ENCODE measurements at regions of chr5 and their contacts with region 1.

Region 1: DNA sequence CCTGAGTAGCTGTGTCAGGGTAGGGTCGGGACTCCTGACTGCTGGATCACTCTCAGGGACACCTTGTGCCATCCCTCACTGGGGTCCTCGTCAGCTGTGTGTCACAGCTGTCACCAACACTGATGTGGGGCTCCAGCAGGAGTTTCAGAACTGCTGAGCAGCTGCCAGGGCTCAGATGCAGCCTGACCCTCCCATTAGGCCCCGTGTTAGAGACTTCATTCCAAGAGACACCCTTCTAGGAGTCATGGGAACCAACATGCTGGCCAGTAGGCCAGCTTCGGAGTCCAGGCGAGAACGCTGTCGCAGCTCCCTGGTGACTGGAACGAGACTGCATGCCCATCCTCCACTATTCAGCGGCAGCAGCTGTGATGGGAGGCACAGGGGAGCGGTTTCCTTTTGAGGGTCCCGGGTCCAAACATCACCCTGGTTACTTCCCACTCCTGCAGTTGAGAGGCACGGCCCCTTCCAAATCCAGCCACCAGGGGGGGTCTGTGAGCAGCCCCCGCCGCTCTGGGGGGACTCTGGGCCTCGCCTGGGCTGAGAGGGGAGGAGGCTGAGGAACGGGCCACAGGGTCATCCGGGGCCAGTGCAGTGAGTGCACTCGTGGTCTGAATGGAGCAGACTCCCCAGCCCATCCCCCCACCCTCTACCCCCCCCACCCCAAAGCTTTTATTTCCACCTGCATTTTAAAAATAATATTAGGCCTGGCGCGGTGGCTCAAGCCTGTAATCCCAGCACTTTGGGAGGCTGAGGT is 12.6 kb upstream of the TCF7 start:
- DNase-seq: peak; percentile 62
- ATAC-seq: peak; percentile 91
- H3K4me3 ChIP-seq: no peak overlapping the region
- H3K27ac ChIP-seq: no peak overlapping the region
- H3K4me1 ChIP-seq: peaks cover 5% of the 10 kb centered on the region; the same call in 1 of the 2 replicates
- H3K27me3 ChIP-seq: no peaks in the 10 kb centered on the region
- CTCF ChIP-seq: peak; percentile 68

Region 2: DNA sequence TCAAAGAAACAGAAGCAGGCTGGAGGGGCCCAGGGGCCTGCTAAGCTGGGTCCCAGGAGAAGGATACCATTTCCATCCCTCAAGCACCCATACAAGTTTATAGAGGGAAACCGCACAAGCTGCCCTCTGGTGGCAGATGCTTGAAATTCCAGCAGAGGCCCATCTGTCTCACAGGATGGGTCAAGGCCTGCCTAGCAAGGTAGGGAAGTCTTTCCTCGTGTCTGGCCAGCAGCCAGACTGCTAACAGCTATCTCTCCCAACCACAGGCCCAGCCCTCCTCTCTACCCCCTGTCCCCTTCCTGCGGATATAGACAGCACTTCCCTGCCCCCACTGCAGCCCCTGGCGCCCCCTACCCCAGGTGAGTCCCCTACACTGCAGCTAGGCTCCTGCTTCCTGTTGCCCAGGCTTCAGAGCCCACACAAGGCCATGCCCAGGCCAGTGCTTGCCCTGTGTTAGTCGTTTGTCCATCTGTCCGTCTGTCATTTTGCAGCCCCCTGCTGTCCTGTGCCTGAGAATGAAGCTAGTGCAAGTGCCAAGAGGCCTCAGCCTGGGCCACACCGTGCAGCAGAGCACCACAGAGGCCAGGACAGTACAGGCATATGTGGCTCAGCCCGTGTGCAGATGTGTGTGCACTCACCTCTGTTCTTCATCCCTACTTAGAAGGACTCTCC is 38.8 kb after region 1 on chr5:
- CTCF ChIA-PET with region 1: no interaction called
- POLR2A ChIA-PET with region 1: no interaction called
- intact Hi-C with region 1: loop called (anchors 2 kb)
- DNase-seq: peak; percentile 88
- ATAC-seq: peak; percentile 77
- H3K4me3 ChIP-seq: no peak overlapping the region
- H3K27ac ChIP-seq: 0 out of 2 replicates have a peak overlapping the region, but pooled peaks have one; percentile 16
- H3K4me1 ChIP-seq: peaks cover 22% of the 10 kb centered on the region
- H3K27me3 ChIP-seq: no peaks in the 10 kb centered on the region
- CTCF ChIP-seq: peak; percentile 68